Keratinocyte (primary cell): ENCODE measurements at regions of chr18 and their contacts with region 1.

Region 1: DNA sequence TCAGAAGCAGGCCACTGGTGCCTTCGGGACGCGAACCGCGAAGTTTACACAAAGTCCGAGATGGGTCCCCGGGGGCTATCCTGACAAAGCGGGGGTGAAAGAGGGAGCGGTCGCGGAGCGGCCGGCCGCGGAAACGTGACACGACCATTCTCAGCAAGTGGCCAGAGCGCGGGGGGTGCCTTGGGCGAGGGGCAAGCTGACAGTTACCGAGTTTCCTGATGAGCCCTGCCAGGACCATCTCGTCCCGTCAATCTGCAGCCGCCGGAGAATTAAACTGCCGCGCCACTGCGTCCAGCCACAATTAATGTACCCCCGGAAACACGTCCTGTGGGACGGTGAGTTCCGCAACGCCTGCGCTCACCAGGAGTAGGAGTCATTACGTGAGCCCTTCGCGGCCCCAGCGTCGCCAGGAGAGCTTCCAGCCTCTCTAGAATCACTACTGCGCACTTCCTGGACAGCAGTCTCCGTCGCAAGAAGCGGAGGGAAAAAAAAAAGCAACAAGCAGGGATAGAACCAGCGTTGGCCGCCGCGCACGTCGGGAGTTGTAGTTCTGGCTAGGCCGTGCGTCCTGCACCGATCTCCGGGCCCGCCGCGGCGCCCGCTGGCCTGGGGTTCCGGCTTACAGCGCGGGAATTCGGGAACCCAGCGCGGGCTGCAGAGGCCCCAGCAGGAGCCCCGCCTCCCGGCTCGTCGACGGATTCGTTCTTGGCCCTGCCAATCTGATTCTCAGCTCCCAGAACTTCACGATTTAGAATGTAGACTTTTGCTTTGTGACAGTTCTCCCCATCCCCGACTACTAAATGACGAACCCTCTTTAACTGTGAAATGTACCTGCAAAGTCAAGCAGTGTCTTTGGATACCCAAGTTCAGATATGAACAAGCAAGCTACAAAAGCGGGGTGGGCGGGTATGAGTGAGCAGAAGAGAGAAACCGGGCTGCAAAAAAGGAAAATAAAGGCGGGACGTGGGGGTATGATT is at the start of gene RTTN:
- DNase-seq: peak; percentile 13
- H3K4me3 ChIP-seq: peak within 1 kb of the TSS; percentile 68 to 88 (median 83)
- H3K27ac ChIP-seq: peak within 1 kb of the TSS; percentile 93
- H3K4me1 ChIP-seq: peaks cover 7% of the 10 kb centered on the region
- H3K27me3 ChIP-seq: no peaks in the 10 kb centered on the region
- CTCF ChIP-seq: no peak
- polyA plus RNA-seq, gene RTTN: 41.8 to 77.3 TPM (median 49.8 TPM) in 3 replicates

Region 2: DNA sequence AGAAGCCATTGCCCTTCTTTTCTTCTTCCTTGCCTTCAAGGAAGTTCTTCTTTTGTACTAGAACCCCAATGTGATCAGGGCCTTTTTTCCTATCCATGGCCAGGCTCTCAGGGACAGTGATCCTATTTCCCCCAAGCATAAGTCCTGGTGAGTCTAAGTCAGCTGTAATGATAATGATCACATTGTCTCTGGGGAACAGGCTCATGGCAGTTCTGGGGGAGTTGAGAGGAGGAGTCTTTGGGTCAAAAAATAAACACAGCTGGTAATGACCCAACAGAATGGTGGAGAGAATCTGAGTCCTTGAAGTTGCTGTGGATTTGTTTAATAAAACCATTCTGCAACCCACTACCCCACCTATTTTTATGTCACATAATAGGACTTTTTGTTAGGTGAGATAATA is 179.8 kb after region 1 on chr18:
- dilution Hi-C with region 1: no loop called
- DNase-seq: no peak
- H3K4me3 ChIP-seq: no peak overlapping the region
- H3K27ac ChIP-seq: peak overlapping the region; percentile 79
- H3K4me1 ChIP-seq: peaks cover 30% of the 10 kb centered on the region
- H3K27me3 ChIP-seq: no peaks in the 10 kb centered on the region
- CTCF ChIP-seq: no peak

Region 3: GRCh38 chr18:70428439-70428838 is 222.7 kb after region 1 on chr18:
- dilution Hi-C with region 1: loop called (anchors 25 kb)
- DNase-seq: no peak
- H3K4me3 ChIP-seq: no peak overlapping the region
- H3K27ac ChIP-seq: no peak overlapping the region
- H3K4me1 ChIP-seq: peaks cover 14% of the 10 kb centered on the region
- H3K27me3 ChIP-seq: no peaks in the 10 kb centered on the region
- CTCF ChIP-seq: no peak